Mammary epithelial cell (primary cell): ENCODE measurements at regions of chr9 and their contacts with region 1.

Region 1: DNA sequence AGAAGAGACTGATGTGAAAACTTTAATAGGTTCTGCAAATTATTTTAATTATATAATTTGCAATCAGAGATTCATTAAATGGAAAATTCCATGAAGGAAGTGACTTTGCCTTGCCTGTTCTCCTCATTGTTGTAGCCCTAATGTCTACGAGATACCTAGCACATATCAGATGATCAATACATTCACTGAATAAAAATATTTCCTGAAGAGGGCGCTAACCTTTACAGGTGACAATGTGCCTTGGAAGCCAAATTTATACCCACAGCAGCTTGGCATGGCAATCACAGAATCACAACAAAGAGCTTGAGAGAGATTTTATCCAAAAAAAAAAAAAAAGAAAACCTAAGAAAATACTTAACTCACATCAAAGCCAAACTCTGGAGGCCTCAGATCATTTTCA is 17.4 kb downstream of the HAUS6 start:
- DNase-seq: no peak
- H3K4me3 ChIP-seq: no peak overlapping the region
- H3K27ac ChIP-seq: no peak overlapping the region
- H3K4me1 ChIP-seq: peaks cover 9% of the 10 kb centered on the region
- H3K27me3 ChIP-seq: no peaks in the 10 kb centered on the region
- CTCF ChIP-seq: peak; percentile 47

Region 2: GRCh38 chr9:19174127-19174912 is 89.0 kb after region 1 on chr9:
- CTCF ChIA-PET with region 1: interaction called, 5 read pairs
- dilution Hi-C with region 1: no loop called
- in situ Hi-C with region 1: no loop called
- intact Hi-C with region 1: loop called (anchors 1 kb)
- DNase-seq: peak; percentile 78
- H3K4me3 ChIP-seq: no peak overlapping the region
- H3K27ac ChIP-seq: peak overlapping the region; percentile 31
- H3K4me1 ChIP-seq: no peaks in the 10 kb centered on the region
- H3K27me3 ChIP-seq: no peaks in the 10 kb centered on the region
- CTCF ChIP-seq: peak; percentile 32 to 61

Region 3: GRCh38 chr9:19313573-19313972 is 228.3 kb after region 1 on chr9:
- CTCF ChIA-PET with region 1: no interaction called
- dilution Hi-C with region 1: no loop called
- in situ Hi-C with region 1: loop called in 1 of 2 experiments (anchors 25 kb)
- intact Hi-C with region 1: no loop called
- DNase-seq: no peak
- H3K4me3 ChIP-seq: no peak overlapping the region
- H3K27ac ChIP-seq: no peak overlapping the region
- H3K4me1 ChIP-seq: no peaks in the 10 kb centered on the region
- H3K27me3 ChIP-seq: no peaks in the 10 kb centered on the region
- CTCF ChIP-seq: no peak